ENCODE measurements at regions of chr7 and their contacts with region 1.

Region 1: GRCh38 chr7:142338633-142339501 is 81.0 kb upstream of the PRSS58 start:
- DNase-seq: peak; percentile 34 to 87
- H3K4me3 ChIP-seq: no peak overlapping the region
- H3K27ac ChIP-seq: no peak overlapping the region
- H3K4me1 ChIP-seq: peaks cover 0 to 5% (median 4%) of the 10 kb centered on the region in 4 experiments; a peak in 5 of 7 replicates
- H3K27me3 ChIP-seq: no peaks in the 10 kb centered on the region
- CTCF ChIP-seq: peak; percentile 89 to 92 (median 92)
- EP300 ChIP-seq: no peak
- POLR2A ChIP-seq: no peak
- RAD21 ChIP-seq: peak; percentile 92 to 94

Region 2: GRCh38 chr7:142323706-142324105 is 15.2 kb before region 1 on chr7:
- CTCF ChIA-PET with region 1: interaction called, 69 read pairs
- POLR2A ChIA-PET with region 1: interaction called, 3 read pairs
- DNase-seq: peak; percentile 50 to 90
- H3K4me3 ChIP-seq: no peak overlapping the region
- H3K27ac ChIP-seq: no peak overlapping the region
- H3K4me1 ChIP-seq: peaks cover 0 to 6% (median 1%) of the 10 kb centered on the region in 4 experiments; a peak in 4 of 7 replicates
- H3K27me3 ChIP-seq: no peaks in the 10 kb centered on the region
- CTCF ChIP-seq: peak; percentile 81 to 92 (median 87)
- EP300 ChIP-seq: 0 out of 3 replicates have a peak, but pooled peaks of 1 of the 2 experiments have one; percentile 24
- POLR2A ChIP-seq: no peak
- RAD21 ChIP-seq: peak; percentile 81 to 88

Region 3: DNA sequence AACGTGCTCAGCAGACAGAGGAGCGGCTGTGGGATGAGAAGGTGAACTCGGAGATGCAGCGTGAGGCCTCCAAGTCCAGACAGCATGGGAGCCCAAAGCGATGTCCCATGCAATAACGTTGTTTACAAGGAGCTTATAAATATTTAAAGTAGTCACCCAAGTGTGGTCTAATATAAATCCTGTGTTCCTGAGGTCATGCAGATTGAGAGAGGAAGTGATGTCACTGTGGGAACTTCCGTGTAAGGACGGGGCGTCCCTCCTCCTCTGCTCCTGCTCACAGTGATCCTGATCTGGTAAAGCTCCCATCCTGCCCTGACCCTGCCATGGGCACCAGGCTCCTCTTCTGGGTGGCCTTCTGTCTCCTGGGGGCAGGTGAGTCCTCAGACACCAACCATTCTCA is 13.7 kb after region 1 on chr7:
- CTCF ChIA-PET with region 1: interaction called, 45 read pairs
- POLR2A ChIA-PET with region 1: no interaction called
- DNase-seq: no peak
- H3K4me3 ChIP-seq: no peak overlapping the region
- H3K27ac ChIP-seq: no peak overlapping the region
- H3K4me1 ChIP-seq: no peaks in the 10 kb centered on the region
- H3K27me3 ChIP-seq: no peaks in the 10 kb centered on the region
- CTCF ChIP-seq: no peak
- EP300 ChIP-seq: no peak
- POLR2A ChIP-seq: no peak
- RAD21 ChIP-seq: no peak

Region 4: GRCh38 chr7:142357953-142358520 is 19.2 kb after region 1 on chr7:
- CTCF ChIA-PET with region 1: interaction called, 45 read pairs
- POLR2A ChIA-PET with region 1: no interaction called
- DNase-seq: peak in 1 of 2 experiments; percentile 56
- H3K4me3 ChIP-seq: no peak overlapping the region
- H3K27ac ChIP-seq: no peak overlapping the region
- H3K4me1 ChIP-seq: peaks cover 5 to 13% (median 9%) of the 10 kb centered on the region in 4 experiments; a peak in 5 of 7 replicates
- H3K27me3 ChIP-seq: no peaks in the 10 kb centered on the region
- CTCF ChIP-seq: peak; percentile 32 to 86 (median 86)
- EP300 ChIP-seq: no peak
- POLR2A ChIP-seq: no peak
- RAD21 ChIP-seq: peak; percentile 78 to 88

Region 5: DNA sequence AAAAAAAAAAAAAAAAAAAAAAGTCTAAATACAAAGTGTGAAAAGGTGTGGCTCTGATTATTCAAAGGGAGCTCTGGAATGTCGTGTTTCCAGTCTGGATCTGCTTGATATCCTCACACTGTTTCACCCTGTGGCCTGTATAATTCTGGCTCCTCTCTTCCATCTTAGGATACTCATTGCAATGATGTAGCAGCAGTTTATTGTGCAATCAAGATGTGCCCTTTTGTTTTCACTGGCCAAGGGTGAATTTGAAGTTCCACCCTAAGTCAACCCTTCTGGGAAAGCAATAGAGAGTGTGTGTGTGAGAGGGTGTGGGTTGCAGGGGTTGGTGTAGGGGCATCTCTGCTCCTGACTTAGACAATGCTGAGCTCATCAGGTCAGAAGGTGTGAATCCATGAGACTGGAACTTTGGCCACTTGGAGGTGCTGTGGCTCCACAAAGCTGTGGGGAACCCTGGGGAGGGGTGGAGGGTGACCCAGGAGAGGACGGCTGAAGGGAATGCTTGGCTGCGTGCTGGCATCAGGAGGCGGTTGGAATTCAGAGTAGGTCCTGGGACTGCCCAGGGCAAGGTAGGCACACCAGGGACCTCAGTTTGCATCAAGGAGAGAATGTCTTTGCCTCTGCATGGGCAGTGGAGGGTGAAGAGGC is 36.9 kb after region 1 on chr7:
- CTCF ChIA-PET with region 1: interaction called, 11 read pairs
- POLR2A ChIA-PET with region 1: no interaction called
- DNase-seq: peak; percentile 43 to 83
- H3K4me3 ChIP-seq: no peak overlapping the region
- H3K27ac ChIP-seq: no peak overlapping the region
- H3K4me1 ChIP-seq: peaks cover 0 to 14% (median 5%) of the 10 kb centered on the region in 4 experiments; a peak in 6 of 7 replicates
- H3K27me3 ChIP-seq: no peaks in the 10 kb centered on the region
- CTCF ChIP-seq: peak; percentile 72 to 87 (median 85)
- EP300 ChIP-seq: no peak
- POLR2A ChIP-seq: no peak
- RAD21 ChIP-seq: peak; percentile 77 to 86

Region 6: GRCh38 chr7:142516038-142516501 is 177.2 kb after region 1 on chr7:
- CTCF ChIA-PET with region 1: interaction called, 10 read pairs
- POLR2A ChIA-PET with region 1: no interaction called
- DNase-seq: peak in 1 of 2 experiments; percentile 56
- H3K4me3 ChIP-seq: no peak overlapping the region
- H3K27ac ChIP-seq: no peak overlapping the region
- H3K4me1 ChIP-seq: peaks cover 0 to 3% (median 0%) of the 10 kb centered on the region in 4 experiments; a peak in 1 of 7 replicates
- H3K27me3 ChIP-seq: no peaks in the 10 kb centered on the region
- CTCF ChIP-seq: peak; percentile 53 to 81 (median 75)
- EP300 ChIP-seq: no peak
- POLR2A ChIP-seq: no peak
- RAD21 ChIP-seq: peak; percentile 61 to 67

Region 7: DNA sequence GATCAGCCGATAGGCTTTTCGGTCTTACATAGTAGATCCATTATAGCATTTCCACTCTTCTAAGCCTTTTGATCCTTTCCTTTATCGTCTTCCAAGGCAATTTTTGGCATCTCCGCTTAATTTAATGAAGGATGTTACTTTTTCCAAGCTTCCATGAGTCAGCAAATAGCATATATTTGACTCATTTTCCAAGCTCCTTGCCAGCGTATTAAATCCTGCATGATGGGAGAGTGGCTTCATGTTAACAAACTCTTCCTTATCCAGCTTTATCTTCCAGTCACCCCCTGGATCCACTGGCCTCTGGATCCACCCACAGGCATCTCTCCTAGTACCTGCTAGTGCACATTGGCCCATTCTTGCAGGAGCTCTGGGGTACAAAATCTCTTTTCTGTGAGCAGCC is 675.0 kb after region 1 on chr7:
- CTCF ChIA-PET with region 1: no interaction called
- POLR2A ChIA-PET with region 1: no interaction called
- DNase-seq: no peak
- H3K4me3 ChIP-seq: no peak overlapping the region
- H3K27ac ChIP-seq: no peak overlapping the region
- H3K4me1 ChIP-seq: peaks cover 0 to 3% (median 0%) of the 10 kb centered on the region in 4 experiments; a peak in 1 of 7 replicates
- H3K27me3 ChIP-seq: no peaks in the 10 kb centered on the region
- CTCF ChIP-seq: no peak
- EP300 ChIP-seq: no peak
- POLR2A ChIP-seq: no peak
- RAD21 ChIP-seq: no peak